Ascending aorta (tissue), 2 donors: ENCODE measurements at regions of chr11 and their contacts with region 1.

Region 1: GRCh38 chr11:66001942-66002647 is at the starts of genes BANF1 and EIF1AD:
- DNase-seq: peak; percentile 58 to 97
- H3K4me3 ChIP-seq: peak within 1 kb of the TSS; percentile 89 to 98
- H3K27ac ChIP-seq: peak within 1 kb of the TSS; percentile 86 to 93
- H3K4me1 ChIP-seq: peaks cover 3 to 27% of the 10 kb centered on the region in 2 donors
- H3K27me3 ChIP-seq: no peaks in the 10 kb centered on the region
- CTCF ChIP-seq: no peak
- total RNA-seq, gene BANF1: 11.7 TPM
- total RNA-seq, gene EIF1AD: 15.6 TPM

Region 2: DNA sequence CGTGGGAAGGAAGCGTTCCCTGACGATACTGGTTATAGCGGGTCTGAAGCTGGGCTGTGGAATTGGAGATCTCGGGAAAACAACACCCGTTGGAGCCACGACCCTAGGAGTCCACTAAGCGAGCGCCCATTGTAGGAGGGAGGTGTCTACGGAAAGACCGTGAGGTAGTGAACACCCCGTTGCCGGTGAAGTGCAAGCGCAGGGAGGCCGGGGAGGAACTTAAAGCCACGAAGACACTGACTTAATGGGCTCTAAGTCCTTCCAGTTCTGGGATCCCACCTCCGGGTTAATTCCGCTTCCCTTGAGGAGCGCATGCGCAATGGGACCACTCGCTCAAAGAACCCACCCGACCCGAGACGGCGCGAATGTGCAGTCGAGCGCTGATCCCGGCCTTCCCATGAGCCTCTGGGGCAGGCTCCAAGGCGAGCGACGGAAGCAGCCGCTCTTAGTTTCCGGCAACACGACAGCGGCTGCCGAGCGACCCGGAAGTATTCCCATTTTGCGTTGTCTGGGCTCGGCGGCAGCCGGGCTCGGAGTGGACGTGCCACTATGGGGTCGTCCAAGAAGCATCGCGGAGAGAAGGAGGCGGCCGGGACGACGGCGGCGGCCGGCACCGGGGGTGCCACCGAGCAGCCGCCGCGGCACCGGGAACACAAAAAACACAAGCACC is 40.7 kb before region 1 on chr11 and contains the start of gene SART1:
- intact Hi-C with region 1: loop called (anchors 1 kb)
- DNase-seq: peak; percentile 86 to 99
- H3K4me3 ChIP-seq: peak within 1 kb of the TSS; percentile 89 to 100
- H3K27ac ChIP-seq: peak within 1 kb of the TSS; percentile 86 to 96
- H3K4me1 ChIP-seq: peaks cover 15 to 23% of the 10 kb centered on the region in 2 donors
- H3K27me3 ChIP-seq: no peaks in the 10 kb centered on the region
- CTCF ChIP-seq: peak in 1 of 3 experiments; percentile 13
- total RNA-seq, gene SART1: 28.4 TPM

Region 3: GRCh38 chr11:66022401-66023185 is 20.5 kb after region 1 on chr11:
- intact Hi-C with region 1: loop called (anchors 1 kb)
- DNase-seq: peak in 1 of 2 donors; percentile 88
- H3K4me3 ChIP-seq: peak overlapping the region; percentile 27 to 58
- H3K27ac ChIP-seq: peak overlapping the region; percentile 75 to 79
- H3K4me1 ChIP-seq: peaks cover 15 to 25% of the 10 kb centered on the region in 2 donors
- H3K27me3 ChIP-seq: no peaks in the 10 kb centered on the region
- CTCF ChIP-seq: peak; percentile 95 to 99 (median 99)

Region 4: GRCh38 chr11:66051766-66052663 is 49.9 kb after region 1 on chr11 and contains the start of gene SF3B2:
- intact Hi-C with region 1: loop called (anchors 1 kb)
- DNase-seq: peak; percentile 93 to 99
- H3K4me3 ChIP-seq: peak within 1 kb of the TSS; percentile 94
- H3K27ac ChIP-seq: peak within 1 kb of the TSS; percentile 83 to 84
- H3K4me1 ChIP-seq: peaks cover 6 to 19% of the 10 kb centered on the region in 2 donors
- H3K27me3 ChIP-seq: no peaks in the 10 kb centered on the region
- CTCF ChIP-seq: no peak
- total RNA-seq, gene SF3B2: 128 TPM

Region 5: DNA sequence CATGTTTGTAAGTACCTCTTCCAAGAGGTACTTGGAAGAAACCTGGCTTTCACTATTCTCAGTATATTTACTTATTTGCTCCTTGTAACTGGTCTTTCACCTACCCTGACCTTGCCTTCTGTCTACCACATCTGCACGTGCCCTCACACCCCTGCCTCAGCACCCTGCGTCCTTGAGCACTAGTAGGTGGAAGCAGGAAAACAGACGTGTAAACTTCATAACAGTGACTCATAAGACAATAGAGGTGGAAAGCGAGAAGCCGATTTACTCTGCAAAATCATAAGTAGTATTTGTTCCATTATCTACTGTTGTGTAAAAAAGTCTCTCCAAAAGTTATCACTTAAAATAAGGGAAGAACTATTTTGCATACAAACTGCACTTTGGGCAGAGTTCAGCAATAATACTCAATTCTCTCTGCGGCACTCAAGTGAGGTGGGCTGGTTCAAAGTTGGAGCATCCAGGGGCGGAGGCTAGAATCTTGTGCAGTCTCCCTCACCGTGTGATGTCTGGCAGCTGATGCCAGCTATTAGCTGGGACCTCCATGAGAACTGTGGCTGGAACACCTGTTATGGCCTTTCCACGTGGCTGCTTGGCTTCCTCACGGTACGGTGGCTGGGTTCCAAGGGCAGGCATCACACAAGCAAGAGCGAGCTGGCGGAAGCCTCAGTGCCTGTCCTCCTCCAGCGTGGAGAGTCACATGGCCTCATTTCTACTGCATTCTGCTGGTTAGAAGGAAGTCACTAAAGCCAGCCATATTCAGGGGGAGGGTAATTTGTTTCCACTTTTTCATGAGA is 98.4 kb after region 1 on chr11:
- intact Hi-C with region 1: no loop called
- DNase-seq: peak in 1 of 2 donors; percentile 12
- H3K4me3 ChIP-seq: no peak overlapping the region
- H3K27ac ChIP-seq: peak overlapping the region in 1 of 2 donors; percentile 3
- H3K4me1 ChIP-seq: peaks cover 0 to 11% of the 10 kb centered on the region in 2 donors
- H3K27me3 ChIP-seq: no peaks in the 10 kb centered on the region
- CTCF ChIP-seq: no peak